ENCODE measurements at regions of chr16 and their contacts with region 1.

Region 1: DNA sequence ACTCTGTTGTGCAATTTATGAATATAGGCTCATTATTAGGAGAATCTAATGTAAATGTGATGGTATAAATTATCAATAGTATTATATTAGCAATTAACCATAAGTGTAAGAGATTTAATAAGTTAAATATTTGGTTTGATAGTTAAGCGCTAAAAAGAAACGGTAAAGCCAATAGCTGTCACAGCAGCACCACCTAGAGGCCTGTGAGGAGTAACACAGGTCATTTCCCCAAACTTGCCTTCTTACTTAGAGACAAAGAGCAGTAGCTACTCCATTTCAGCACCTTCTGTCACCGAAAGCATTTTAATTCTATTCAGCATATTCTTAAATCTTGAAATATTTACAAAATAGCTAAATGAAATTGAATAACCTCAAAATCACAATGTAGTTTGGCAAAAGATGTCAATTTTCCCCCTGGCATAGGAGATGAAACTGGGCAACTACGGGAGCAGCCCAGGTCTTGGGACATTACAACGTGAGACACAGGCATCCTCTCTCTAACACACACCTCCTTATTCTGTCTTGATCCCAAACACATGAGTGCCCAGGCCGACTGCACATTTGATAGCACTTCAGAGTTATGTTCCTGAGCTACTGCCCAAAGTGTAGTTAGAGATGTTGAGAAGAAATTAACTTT is 14.2 kb upstream of the DYNLRB2 start:
- DNase-seq: peak; percentile 39 to 62 (median 45)
- H3K4me3 ChIP-seq: no peak overlapping the region
- H3K4me3 Mint-ChIP-seq: no peak overlapping the region
- H3K27ac ChIP-seq: no peak overlapping the region
- H3K27ac Mint-ChIP-seq: no peak overlapping the region
- H3K4me1 ChIP-seq: peaks cover 4% of the 10 kb centered on the region
- H3K4me1 Mint-ChIP-seq: peaks cover 0 to 3% (median 0%) of the 10 kb centered on the region in 3 donors
- H3K27me3 ChIP-seq: no peaks in the 10 kb centered on the region
- H3K27me3 Mint-ChIP-seq: no peaks in the 10 kb centered on the region

Region 2: GRCh38 chr16:80407265-80407987 is 119.1 kb before region 1 on chr16:
- CTCF ChIA-PET with region 1: no interaction called
- POLR2A ChIA-PET with region 1: no interaction called
- DNase-seq: no peak
- H3K4me3 ChIP-seq: no peak overlapping the region
- H3K4me3 Mint-ChIP-seq: no peak overlapping the region
- H3K27ac ChIP-seq: no peak overlapping the region
- H3K27ac Mint-ChIP-seq: no peak overlapping the region
- H3K4me1 ChIP-seq: no peaks in the 10 kb centered on the region
- H3K4me1 Mint-ChIP-seq: no peaks in the 10 kb centered on the region
- H3K27me3 ChIP-seq: no peaks in the 10 kb centered on the region
- H3K27me3 Mint-ChIP-seq: peaks cover 6 to 51% of the 10 kb centered on the region in 2 donors

Region 3: DNA sequence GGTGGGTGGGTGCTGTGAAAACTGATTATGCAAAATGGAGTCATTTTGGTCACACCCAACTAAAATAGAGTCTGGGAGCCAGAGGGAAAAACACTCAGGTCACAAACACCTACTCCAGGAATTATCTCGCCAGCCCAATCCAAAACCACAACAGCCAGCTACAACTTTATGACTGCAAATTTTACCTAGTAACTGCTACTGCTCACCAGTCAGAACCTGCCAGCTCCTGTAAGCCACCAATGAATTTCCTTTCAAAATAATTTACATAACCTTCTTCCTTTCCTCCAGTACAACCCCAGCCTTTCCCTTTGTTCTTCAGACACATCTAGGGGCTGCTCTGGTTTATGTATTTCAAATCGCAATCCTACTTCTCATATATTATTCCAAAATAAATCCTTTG is 38.4 kb before region 1 on chr16:
- CTCF ChIA-PET with region 1: no interaction called
- POLR2A ChIA-PET with region 1: no interaction called
- DNase-seq: no peak
- H3K4me3 ChIP-seq: no peak overlapping the region
- H3K4me3 Mint-ChIP-seq: no peak overlapping the region
- H3K27ac ChIP-seq: no peak overlapping the region
- H3K27ac Mint-ChIP-seq: no peak overlapping the region
- H3K4me1 ChIP-seq: no peaks in the 10 kb centered on the region
- H3K4me1 Mint-ChIP-seq: no peaks in the 10 kb centered on the region
- H3K27me3 ChIP-seq: no peaks in the 10 kb centered on the region
- H3K27me3 Mint-ChIP-seq: peaks cover 16 to 36% of the 10 kb centered on the region in 2 donors

Region 4: GRCh38 chr16:80627108-80627507 is 100.6 kb after region 1 on chr16:
- CTCF ChIA-PET with region 1: no interaction called
- POLR2A ChIA-PET with region 1: no interaction called
- DNase-seq: no peak
- H3K4me3 ChIP-seq: no peak overlapping the region
- H3K4me3 Mint-ChIP-seq: no peak overlapping the region
- H3K27ac ChIP-seq: no peak overlapping the region
- H3K27ac Mint-ChIP-seq: no peak overlapping the region
- H3K4me1 ChIP-seq: no peaks in the 10 kb centered on the region
- H3K4me1 Mint-ChIP-seq: peaks cover 0 to 9% (median 0%) of the 10 kb centered on the region in 3 donors
- H3K27me3 ChIP-seq: no peaks in the 10 kb centered on the region
- H3K27me3 Mint-ChIP-seq: no peaks in the 10 kb centered on the region

Region 5: GRCh38 chr16:80694949-80695471 is 168.5 kb after region 1 on chr16:
- CTCF ChIA-PET with region 1: no interaction called
- POLR2A ChIA-PET with region 1: no interaction called
- DNase-seq: no peak
- H3K4me3 ChIP-seq: no peak overlapping the region
- H3K4me3 Mint-ChIP-seq: peak overlapping the region in 1 of 7 donors; percentile 2
- H3K27ac ChIP-seq: no peak overlapping the region
- H3K27ac Mint-ChIP-seq: no peak overlapping the region
- H3K4me1 ChIP-seq: no peaks in the 10 kb centered on the region
- H3K4me1 Mint-ChIP-seq: peaks cover 46 to 80% (median 78%) of the 10 kb centered on the region in 3 donors
- H3K27me3 ChIP-seq: no peaks in the 10 kb centered on the region
- H3K27me3 Mint-ChIP-seq: peaks cover 0 to 2% of the 10 kb centered on the region in 2 donors

Region 6: DNA sequence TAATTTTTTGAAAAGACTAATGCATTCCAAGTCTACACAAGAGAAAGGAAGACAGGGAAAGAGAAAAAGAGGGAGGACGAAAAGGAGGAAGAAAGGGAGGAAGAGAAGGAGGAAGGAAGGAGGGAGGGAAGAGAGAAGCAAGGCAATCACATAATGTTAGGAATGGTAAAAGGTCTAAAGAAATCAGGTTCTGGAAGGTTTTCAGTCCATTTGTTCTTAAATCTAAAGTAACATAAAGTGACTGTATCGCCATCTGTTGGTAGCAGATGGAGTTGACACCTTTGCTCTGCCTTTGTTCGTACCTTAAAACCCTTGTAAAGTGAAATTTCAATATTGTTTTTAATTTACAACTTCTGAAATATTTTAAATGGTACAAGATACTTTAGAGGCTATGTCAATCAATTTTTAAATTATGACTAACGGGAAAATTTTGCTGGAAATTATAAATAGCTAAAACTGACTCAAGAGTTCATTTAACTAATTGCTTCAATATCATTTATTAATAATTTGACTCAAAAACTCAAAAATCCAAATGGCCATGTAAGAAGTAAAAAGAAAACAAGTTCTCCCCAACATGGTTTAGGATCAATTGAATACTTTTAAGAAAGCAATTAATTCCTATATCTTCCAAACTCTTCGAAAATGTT is 298.3 kb after region 1 on chr16:
- CTCF ChIA-PET with region 1: interaction called, 13 read pairs
- POLR2A ChIA-PET with region 1: no interaction called
- DNase-seq: peak; percentile 6 to 49 (median 19)
- H3K4me3 ChIP-seq: no peak overlapping the region
- H3K4me3 Mint-ChIP-seq: no peak overlapping the region
- H3K27ac ChIP-seq: no peak overlapping the region
- H3K27ac Mint-ChIP-seq: no peak overlapping the region
- H3K4me1 ChIP-seq: no peaks in the 10 kb centered on the region
- H3K4me1 Mint-ChIP-seq: peaks cover 0 to 1% (median 0%) of the 10 kb centered on the region in 3 donors
- H3K27me3 ChIP-seq: no peaks in the 10 kb centered on the region
- H3K27me3 Mint-ChIP-seq: peaks cover 4 to 10% of the 10 kb centered on the region in 2 donors

Measured in CD8-positive, alpha-beta memory T cell (primary cell).